Right ventricle myocardium inferior (tissue), 1 donor: ENCODE measurements at regions of chr4 and their contacts with region 1.

Region 1: DNA sequence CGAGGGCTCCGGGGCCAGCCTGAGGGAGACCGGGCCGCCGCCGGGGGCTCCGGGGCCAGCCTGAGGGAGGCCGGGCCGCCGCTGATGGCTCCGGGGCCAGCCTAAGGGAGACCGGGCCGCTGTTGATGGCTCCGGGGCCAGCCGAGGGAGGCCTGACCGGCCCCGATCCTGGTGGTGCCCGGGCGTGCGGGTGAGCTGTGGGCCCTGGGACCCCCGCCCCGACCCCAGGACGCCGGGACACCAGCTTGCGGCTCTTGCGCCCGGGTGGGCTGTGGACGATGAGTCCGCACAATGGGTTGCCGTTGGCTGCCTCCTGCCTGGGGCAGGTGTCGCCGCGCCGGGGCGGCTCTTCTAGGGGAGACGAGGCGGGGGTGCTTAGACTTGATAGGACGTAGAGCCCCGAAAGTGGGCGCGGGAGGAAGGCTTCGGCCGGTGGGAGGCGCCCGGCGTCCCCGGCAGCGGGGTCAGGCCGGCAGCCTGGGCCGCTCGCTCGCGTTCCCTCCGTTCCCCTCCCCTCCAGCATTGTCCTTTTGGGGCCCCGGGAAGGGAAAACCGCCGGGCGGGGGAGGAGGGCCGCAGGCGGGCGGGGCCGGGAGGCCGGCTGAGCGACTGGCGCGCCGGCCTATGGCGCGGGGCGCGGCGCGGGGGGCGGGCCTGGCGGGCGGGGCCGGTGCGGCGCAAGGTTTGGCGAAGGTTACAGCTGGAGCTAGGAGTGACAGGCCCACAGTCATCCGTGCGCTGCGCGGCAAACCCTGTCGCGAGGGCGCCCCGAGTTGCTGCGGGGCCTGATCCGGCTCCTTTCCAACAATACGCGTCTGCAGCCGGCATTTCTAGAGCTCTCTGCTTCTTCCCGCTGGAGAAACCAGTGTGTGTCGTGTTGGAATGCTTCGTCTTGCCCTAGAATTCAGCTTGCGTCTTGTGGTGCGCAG is 790 bp downstream of the KIAA0232 start:
- DNase-seq: peak; percentile 95
- ATAC-seq: peak; percentile 88

Region 2: DNA sequence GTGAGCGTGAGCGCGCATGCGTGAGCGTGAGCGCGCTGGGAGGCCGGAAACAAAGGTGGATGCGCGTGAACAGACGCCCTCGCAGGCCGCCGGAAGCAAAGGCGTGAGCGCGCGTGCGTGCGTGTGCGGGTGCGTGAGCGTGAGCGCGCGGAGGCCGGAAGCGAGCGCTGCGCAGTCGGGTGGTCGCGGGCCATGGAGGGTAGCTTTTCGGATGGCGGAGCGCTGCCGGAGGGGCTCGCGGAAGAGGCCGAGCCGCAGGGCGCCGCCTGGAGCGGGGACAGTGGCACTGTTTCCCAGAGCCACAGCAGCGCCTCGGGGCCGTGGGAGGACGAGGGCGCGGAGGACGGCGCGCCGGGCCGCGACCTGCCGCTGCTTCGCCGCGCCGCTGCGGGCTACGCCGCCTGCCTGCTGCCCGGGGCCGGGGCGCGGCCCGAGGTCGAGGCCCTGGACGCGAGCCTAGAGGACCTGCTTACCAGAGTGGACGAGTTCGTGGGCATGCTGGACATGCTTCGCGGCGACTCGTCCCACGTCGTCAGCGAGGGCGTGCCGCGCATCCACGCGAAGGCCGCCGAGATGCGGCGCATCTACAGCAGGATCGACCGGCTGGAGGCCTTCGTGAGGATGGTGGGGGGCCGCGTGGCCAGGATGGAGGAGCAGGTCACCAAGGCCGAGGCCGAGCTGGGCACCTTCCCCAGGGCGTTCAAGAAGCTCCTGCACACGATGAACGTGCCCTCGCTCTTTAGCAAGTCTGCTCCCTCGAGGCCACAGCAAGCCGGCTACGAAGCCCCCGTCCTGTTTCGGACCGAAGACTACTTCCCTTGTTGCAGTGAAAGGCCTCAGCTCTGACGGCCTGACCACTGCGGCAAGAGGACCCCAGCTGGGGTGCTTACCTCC is 67.1 kb before region 1 on chr4 and contains the start of gene BLOC1S4:
- intact Hi-C with region 1: loop called (anchors 2 kb)
- DNase-seq: peak; percentile 96
- ATAC-seq: peak; percentile 94
- total RNA-seq, gene BLOC1S4: 6.0 TPM

Region 3: DNA sequence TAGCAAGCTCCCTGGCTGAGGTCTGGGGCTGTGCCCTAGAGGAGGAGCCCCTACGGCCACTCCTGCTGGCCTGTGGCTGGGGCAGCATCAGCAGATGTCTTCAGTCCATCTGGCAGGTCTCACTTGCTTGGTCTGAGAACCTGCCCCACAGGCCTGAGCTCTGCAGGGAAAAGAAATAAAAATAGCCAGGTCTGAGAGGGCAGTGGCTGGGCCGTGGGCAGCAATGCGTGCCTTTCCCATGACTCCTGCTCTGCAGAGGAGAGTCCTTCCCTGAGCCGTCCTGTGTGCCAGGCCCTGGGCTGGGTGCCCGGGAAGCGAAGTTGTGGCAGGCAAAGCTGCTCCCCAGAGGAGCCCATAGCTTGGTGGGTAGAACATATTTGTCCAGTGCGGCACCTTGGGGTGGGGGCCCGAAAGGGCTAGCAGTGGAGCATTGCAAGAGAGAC is 12.1 kb before region 1 on chr4:
- intact Hi-C with region 1: loop called (anchors 1 kb)
- DNase-seq: peak; percentile 83
- ATAC-seq: peak; percentile 89

Region 4: DNA sequence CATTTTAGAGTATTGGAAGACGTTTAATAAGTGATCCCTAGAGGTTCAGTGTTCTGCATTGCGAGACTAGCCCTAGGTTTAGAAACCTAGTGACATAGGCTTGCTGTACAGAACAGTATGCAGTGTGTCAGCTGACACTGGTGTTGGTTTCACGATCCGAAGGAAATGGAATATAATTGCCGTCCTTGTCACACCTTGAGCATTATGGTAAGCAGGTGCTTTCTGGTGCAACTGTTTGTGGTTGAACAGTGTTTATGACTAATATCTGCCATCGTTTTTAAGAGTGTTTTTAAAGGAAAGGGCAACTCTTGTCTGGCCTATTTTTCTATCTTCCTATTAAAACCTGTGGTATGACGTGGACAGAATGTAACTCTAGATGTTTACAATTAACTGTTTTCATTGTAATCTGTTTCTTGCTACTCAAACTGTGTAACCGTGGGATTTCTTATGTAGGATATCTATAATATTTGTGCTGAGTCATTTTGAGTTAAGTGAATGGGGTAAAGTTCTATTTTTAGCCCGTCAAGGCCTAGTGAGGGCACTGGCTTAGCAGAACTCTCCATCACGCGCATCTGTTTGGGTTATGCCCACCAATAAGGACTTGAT is 72.5 kb after region 1 on chr4:
- intact Hi-C with region 1: loop called (anchors 5 kb)
- DNase-seq: no peak
- ATAC-seq: peak; percentile 76

Region 5: DNA sequence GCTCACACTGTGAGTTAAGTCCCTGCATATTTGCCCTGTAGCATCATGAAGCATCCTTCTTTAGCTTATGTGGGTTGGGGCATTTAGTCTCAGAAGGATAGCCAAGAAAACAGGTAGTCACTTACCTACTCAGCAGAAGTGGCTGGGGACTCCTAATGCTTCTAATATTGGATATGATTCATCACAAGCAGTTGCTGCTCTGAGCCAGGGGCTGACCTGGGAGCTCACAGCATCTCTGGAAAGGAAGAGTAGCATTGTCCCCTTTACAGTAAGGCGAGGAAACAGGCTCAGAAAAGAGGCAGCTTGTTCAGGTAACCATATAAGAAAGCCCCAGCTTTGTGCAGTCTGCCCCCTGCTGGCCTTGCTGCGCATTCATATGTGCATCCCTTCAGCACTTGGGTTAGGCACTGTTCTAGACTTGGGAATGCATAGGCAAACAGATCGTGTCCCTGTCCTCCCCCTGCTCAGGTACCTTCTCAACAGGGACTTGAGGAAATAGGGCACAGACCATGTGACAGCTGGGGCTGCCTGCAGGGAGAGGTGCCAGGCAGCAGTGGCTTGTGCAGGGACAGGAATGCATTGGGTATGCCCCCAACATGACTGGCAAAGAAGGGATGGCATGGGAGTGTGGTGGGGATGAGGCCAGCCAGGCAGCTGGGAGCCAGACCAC is 90.6 kb after region 1 on chr4:
- intact Hi-C with region 1: loop called (anchors 2 kb)
- DNase-seq: peak; percentile 87
- ATAC-seq: peak; percentile 49

Region 6: GRCh38 chr4:6974138-6974848 is 191.0 kb after region 1 on chr4:
- intact Hi-C with region 1: no loop called
- DNase-seq: peak; percentile 71
- ATAC-seq: peak; percentile 82

Region 7: DNA sequence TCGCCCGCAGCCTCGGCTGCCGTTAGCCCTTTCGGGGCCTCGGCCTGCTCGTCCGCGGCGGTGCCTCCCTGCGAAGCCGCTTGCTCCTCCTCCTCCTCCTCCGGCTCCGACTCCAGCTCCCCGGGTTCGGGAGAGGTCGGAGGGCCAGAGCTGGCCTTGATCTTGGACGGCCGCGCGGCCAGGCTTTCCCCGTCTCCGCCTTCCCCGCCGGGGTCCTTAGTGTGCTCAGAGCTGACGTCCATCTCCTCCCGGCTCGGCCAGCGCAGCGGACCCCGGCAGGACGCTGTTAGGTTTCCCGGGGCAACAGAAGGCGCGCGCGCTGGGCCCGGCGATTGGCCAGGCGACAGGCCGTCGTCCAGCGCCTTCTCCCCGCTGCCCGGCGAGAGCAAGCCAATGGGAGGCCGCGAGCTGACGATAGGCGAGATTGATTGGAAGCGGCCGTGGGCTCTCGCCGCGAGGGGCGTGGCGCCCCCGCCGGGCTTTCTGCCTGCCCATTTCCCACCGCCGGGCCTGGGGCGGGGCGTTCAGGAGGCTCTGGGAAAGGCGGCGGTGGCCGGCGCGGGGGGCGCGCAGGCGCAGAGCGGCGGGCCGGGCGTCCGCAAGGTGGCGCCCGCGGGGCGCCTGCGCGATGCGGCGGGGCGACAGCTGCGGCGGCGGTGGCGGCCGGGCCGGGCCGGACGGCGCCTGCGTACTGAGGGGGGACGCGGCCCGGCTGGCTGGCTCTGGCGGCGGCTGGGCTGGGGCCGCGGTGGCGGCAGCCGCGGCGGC is 259.6 kb after region 1 on chr4 and contains the start of gene TADA2B:
- intact Hi-C with region 1: loop called (anchors 2 kb)
- DNase-seq: peak; percentile 99
- ATAC-seq: peak; percentile 97
- total RNA-seq, gene TADA2B: 33.3 TPM